Activated naive CD4-positive, alpha-beta T cell treated with anti-CD3 and anti-CD28 coated beads, Interleukin-2, amount 10 ng/mL, durations not matched to agents 7 days and 5 days (primary cell): ENCODE measurements at regions of chr18 and their contacts with region 1.

Region 1: DNA sequence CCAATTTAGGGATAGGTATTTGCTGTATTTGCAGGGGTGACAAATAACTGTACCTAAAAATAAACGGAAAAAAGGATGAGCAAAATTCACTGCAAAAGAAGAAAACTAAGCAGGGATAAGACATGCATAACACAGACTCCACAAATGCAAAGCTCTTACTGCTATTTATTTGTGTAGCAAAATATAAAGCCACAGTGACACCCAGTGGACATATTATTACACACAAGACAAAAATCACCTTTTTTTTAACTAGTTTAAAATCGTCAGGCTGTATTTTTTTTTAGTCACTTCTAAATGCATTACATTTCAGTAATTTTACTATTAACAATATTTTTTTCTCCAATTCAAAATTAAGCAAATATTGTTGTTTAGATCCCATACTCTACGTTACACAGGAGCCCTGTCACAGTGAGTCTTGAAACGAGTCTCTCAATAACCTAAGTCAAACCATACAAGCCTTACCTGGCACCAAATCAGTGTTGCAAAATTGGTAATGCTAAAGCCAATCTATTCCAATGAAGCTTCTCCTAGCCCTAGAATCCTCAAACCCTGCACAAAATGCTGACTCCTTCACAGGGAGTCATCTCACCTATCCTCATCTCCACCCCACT is 23.7 kb downstream of the METTL4 start:
- DNase-seq: no peak
- H3K4me3 Mint-ChIP-seq: no peak overlapping the region
- H3K27ac Mint-ChIP-seq: peak overlapping the region; percentile 58
- H3K4me1 Mint-ChIP-seq: peaks cover 2% of the 10 kb centered on the region
- H3K27me3 Mint-ChIP-seq: no peaks in the 10 kb centered on the region

Region 2: DNA sequence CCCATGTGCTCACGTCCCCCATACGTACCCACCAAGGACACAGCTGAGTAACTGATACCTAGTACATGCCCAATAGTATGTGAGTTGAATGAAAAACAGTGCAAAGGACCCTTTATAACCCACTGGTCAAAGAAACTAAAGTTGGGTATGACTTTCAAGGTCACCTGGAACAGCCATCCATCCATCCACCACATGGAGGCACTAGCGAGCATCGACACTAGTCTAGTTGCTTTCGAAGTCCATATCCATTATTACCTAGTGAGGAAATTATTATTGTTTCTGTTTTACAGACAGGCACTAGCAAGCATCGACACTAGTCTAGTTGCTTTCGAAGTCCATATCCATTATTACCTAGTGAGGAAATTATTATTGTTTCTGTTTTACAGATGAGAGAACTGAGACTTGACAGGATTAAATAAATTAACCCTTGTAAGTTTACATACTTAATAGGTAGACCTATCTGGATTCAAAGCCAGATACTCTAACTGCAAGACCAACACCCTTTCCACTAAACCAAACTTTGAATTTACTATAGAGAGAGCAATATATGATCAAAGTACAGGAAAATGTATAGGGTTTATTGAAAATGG is 209.9 kb before region 1 on chr18:
- CTCF ChIA-PET with region 1: interaction called, 23 read pairs
- DNase-seq: peak; percentile 62
- H3K4me3 Mint-ChIP-seq: no peak overlapping the region
- H3K27ac Mint-ChIP-seq: no peak overlapping the region
- H3K4me1 Mint-ChIP-seq: peaks cover 6% of the 10 kb centered on the region
- H3K27me3 Mint-ChIP-seq: peaks cover 4% of the 10 kb centered on the region

Region 3: DNA sequence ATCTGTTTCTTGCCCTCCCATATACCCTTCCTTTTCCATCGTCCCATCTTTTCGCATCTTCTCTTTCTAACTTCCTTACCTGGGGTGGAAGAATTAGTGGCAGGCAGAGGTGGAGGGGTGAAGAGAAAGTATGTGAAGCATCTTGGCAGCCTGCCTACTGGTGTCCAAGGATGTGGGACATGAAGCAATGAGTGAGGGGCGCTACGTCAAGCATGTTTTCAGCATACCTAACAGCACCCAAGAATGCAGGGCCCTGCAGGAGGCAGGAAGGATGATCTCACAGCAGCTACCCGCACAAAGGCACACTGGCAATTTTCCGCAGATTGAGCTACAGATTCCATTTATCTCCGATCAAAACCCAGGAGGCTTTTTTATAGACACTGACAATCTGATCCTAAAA is 18.4 kb before region 1 on chr18:
- CTCF ChIA-PET with region 1: no interaction called
- DNase-seq: no peak
- H3K4me3 Mint-ChIP-seq: no peak overlapping the region
- H3K27ac Mint-ChIP-seq: no peak overlapping the region
- H3K4me1 Mint-ChIP-seq: no peaks in the 10 kb centered on the region
- H3K27me3 Mint-ChIP-seq: no peaks in the 10 kb centered on the region

Region 4: DNA sequence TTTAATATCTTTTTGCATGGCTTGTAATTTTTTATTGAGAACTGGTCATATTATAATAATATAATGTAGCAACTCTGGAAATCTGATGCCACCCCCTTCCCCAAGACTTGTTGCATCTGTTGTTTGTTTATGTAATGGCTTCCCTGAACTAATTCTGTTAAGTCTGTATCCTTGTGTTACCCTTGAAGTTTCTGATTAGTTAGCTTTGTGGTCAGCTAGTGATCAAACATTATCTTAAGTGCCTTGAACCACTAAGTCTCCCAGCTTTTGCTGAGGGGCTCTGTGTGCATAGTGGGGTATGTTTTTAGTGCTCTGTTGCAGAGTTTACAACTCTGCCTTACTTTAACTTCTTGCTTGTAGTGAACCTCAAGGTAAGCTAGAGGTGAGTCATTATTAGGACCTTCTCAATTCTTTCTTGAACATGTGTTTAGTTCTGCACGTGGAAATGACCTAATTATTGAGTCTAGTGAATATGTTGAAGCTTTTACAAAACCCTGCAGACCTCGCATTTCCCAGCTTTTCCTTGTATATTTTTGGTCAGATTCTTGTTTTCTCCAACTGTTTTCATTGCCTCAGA is 132.7 kb after region 1 on chr18:
- CTCF ChIA-PET with region 1: no interaction called
- DNase-seq: no peak
- H3K4me3 Mint-ChIP-seq: no peak overlapping the region
- H3K27ac Mint-ChIP-seq: peak overlapping the region; percentile 65
- H3K4me1 Mint-ChIP-seq: peaks cover 58% of the 10 kb centered on the region
- H3K27me3 Mint-ChIP-seq: no peaks in the 10 kb centered on the region